ENCODE measurements at regions of chr3 and their contacts with region 1.

Region 1: DNA sequence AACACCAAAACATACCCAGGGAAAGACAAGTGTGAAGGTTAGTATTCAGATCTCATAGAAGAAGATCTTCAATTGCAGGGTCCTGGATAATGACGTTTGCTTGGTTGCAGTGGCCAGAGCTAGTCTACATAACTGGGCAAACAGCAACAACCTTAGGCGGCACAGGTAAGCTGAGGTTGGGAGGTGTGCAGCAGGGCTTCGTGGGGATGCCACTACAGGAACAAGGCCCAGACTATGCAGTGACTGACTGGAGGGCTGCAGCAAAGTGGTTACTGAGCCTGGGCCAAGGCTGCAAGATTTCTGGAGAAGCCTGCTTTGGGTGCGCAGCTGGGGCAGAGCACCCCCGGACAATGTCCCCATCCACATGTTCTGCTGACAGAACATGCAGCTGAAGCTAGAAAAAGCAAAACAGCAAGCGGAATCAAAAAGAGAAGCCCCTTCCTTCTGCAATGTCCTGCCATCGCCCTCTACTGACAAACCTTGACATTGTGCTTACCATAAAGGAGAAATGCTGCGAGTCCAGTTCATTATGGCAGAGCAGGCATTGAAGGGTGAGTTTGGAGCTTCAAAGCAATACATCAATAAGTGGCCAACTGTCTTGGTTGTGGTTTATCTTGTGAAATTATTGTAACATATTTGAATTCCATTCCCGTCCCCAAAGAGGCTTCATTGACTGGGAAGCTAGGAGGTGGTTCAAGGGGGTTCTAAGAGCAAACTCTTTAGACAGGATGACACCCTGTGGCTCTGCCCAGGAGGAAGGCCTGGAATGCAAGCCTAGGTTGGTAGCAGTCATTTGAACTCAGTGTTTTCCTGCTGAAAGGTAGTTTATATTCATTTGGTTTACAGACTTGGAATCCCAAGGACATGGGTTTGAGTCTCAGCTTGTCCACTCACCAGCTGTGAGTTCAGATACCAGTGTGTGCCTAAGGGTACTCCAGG is 217.0 kb downstream of the PDCD6IP start:
- H3K4me3 ChIP-seq: no peak overlapping the region
- H3K27ac ChIP-seq: no peak overlapping the region
- H3K4me1 ChIP-seq: peaks cover 3% of the 10 kb centered on the region
- CTCF ChIP-seq: no peak

Region 2: GRCh38 chr3:33883538-33883950 is 131.9 kb before region 1 on chr3:
- CTCF ChIA-PET with region 1: interaction called, 57 read pairs
- POLR2A ChIA-PET with region 1: no interaction called
- H3K4me3 ChIP-seq: peak overlapping the region; percentile 23
- H3K27ac ChIP-seq: no peak overlapping the region
- H3K4me1 ChIP-seq: no peaks in the 10 kb centered on the region
- CTCF ChIP-seq: peak; percentile 26; the same call in 1 of the 2 replicates

Region 3: GRCh38 chr3:34351882-34352777 is 336.7 kb after region 1 on chr3:
- CTCF ChIA-PET with region 1: no interaction called
- POLR2A ChIA-PET with region 1: no interaction called
- H3K4me3 ChIP-seq: no peak overlapping the region
- H3K27ac ChIP-seq: no peak overlapping the region
- H3K4me1 ChIP-seq: no peaks in the 10 kb centered on the region
- CTCF ChIP-seq: no peak

Measured in HEK293 (cell line).